Calu3 (cell line): ENCODE measurements at regions of chr1 and their contacts with region 1.

Region 1: GRCh38 chr1:170765712-170766330 is 101.9 kb downstream of the PRRX1 start:
- DNase-seq: no peak
- H3K4me3 Mint-ChIP-seq: no peak overlapping the region
- H3K27ac Mint-ChIP-seq: no peak overlapping the region
- H3K4me1 Mint-ChIP-seq: no peaks in the 10 kb centered on the region
- H3K27me3 Mint-ChIP-seq: no peaks in the 10 kb centered on the region
- CTCF ChIP-seq: no peak

Region 2: GRCh38 chr1:169928438-169929209 is 837.2 kb before region 1 on chr1:
- CTCF ChIA-PET with region 1: no interaction called
- intact Hi-C with region 1: loop called (anchors 1 kb)
- DNase-seq: no peak
- H3K4me3 Mint-ChIP-seq: no peak overlapping the region
- H3K27ac Mint-ChIP-seq: no peak overlapping the region
- H3K4me1 Mint-ChIP-seq: peaks cover 15% of the 10 kb centered on the region
- H3K27me3 Mint-ChIP-seq: no peaks in the 10 kb centered on the region
- CTCF ChIP-seq: peak; percentile 53

Region 3: GRCh38 chr1:170010443-170010842 is 755.4 kb before region 1 on chr1:
- CTCF ChIA-PET with region 1: no interaction called
- intact Hi-C with region 1: loop called (anchors 1 kb)
- DNase-seq: peak; percentile 65
- H3K4me3 Mint-ChIP-seq: no peak overlapping the region
- H3K27ac Mint-ChIP-seq: no peak overlapping the region
- H3K4me1 Mint-ChIP-seq: no peaks in the 10 kb centered on the region
- H3K27me3 Mint-ChIP-seq: no peaks in the 10 kb centered on the region
- CTCF ChIP-seq: peak; percentile 46

Region 4: DNA sequence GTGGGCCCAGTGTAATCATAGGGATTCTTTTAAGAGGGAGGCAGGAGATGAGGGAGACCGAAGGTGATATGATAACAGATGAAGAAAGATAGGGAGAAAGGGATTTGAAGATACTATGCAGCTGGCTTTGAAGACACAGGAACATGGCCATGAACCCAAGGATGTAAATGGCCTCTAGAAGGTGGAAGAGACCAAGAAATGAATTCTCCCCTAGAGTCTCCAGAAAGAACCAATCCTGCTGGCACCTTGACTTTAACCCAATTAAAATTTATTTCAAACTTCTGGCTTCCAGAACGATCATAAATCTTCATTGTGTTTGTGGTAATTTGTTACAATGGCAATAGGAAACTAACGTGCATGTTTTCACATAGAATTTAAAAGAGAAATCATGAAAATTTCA is 328.9 kb before region 1 on chr1:
- CTCF ChIA-PET with region 1: no interaction called
- intact Hi-C with region 1: loop called (anchors 5 kb)
- DNase-seq: no peak
- H3K4me3 Mint-ChIP-seq: no peak overlapping the region
- H3K27ac Mint-ChIP-seq: no peak overlapping the region
- H3K4me1 Mint-ChIP-seq: no peaks in the 10 kb centered on the region
- H3K27me3 Mint-ChIP-seq: no peaks in the 10 kb centered on the region
- CTCF ChIP-seq: no peak

Region 5: GRCh38 chr1:170692866-170693575 is 72.8 kb before region 1 on chr1:
- CTCF ChIA-PET with region 1: interaction called, 6 read pairs
- intact Hi-C with region 1: loop called (anchors 1 kb)
- DNase-seq: no peak
- H3K4me3 Mint-ChIP-seq: no peak overlapping the region
- H3K27ac Mint-ChIP-seq: peak overlapping the region; percentile 27
- H3K4me1 Mint-ChIP-seq: peaks cover 20% of the 10 kb centered on the region
- H3K27me3 Mint-ChIP-seq: no peaks in the 10 kb centered on the region
- CTCF ChIP-seq: no peak

Region 6: DNA sequence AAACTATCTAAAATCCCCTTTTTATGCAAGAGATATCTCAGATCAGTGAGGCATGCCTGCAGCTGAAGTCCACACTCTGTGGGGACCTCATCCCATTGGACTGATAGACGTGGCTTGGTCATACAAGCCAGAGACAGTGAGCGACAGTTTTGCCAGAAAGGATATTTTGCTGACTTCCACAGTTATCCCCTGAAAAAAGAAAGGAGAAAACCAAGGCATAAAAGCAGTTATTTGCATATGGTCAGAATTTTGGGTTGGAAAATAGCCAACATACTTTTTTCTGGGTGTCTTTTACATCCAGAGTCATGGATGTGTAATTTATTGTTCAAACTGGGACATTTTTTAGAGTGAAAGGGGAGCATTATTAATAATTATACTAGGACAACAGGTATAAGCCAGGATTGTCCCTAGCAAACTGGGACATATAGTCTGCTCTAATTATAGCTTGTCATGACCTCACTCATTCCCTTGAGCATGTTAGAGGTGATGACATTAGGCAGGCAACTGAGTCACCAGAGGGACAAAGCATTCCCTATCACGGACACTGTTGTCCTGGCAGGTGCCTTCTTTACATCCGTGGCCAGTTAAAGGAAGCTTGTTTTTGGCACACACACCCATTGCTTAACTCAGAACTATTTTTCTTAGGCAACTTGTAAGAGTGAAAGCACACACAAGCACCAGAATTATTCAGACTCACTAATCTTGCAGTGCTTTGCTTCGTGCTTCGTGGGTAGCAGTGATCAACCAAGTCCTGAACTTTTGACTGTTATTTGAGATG is 36.4 kb before region 1 on chr1:
- CTCF ChIA-PET with region 1: no interaction called
- intact Hi-C with region 1: no loop called
- DNase-seq: no peak
- H3K4me3 Mint-ChIP-seq: no peak overlapping the region
- H3K27ac Mint-ChIP-seq: no peak overlapping the region
- H3K4me1 Mint-ChIP-seq: peaks cover 11% of the 10 kb centered on the region
- H3K27me3 Mint-ChIP-seq: no peaks in the 10 kb centered on the region
- CTCF ChIP-seq: no peak

Region 7: DNA sequence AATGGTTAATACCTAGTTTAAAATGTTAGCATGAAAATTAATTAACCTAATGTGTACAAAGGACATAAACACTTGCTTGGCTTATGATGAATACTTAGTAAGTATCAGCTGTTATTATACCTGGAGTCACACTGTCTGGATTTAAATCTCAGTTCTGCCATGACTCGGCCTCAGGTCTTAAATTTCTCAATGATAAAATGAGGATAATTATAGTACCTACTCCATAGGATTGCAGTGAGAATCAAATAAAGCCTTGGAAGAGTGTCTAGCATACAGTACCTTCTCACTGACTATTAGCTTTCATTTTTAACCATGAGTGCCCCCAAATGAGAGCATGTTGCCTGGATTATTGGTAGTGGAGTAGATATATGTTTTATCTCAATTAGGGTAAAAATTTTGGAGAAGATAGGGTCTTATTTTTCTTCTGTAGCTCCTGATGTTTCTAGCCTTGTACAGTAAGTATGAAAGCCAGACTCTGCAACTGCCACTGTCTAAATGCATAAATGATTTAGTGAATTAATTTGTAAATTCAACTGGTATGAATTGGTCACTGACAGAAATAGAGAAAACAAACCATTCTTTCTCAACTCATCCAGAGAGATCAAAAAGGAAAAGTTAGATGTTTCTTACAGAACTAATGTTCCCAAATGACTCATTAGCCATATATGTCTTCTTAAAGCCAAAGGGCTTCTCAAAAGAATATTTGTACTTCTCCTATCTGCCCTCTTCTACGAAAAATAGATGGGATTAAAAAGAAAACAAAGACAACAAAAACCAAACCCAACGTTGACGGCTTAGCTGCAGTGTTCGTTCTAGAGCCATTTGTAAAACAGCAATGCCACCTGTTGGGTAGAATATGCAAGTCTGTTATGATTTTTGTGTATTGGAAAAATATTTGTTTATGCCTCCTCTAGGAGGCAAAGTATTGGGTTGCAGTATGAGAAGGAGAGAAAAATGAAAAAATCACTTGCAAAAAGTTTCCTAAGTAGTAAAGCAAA is 115.7 kb after region 1 on chr1:
- CTCF ChIA-PET with region 1: no interaction called
- intact Hi-C with region 1: loop called (anchors 1 kb)
- DNase-seq: peak; percentile 19
- H3K4me3 Mint-ChIP-seq: no peak overlapping the region
- H3K27ac Mint-ChIP-seq: no peak overlapping the region
- H3K4me1 Mint-ChIP-seq: peaks cover 6% of the 10 kb centered on the region
- H3K27me3 Mint-ChIP-seq: no peaks in the 10 kb centered on the region
- CTCF ChIP-seq: peak; percentile 43

Region 8: GRCh38 chr1:170929835-170930554 is 164.2 kb after region 1 on chr1:
- CTCF ChIA-PET with region 1: no interaction called
- intact Hi-C with region 1: loop called (anchors 5 kb)
- DNase-seq: peak; percentile 38
- H3K4me3 Mint-ChIP-seq: no peak overlapping the region
- H3K27ac Mint-ChIP-seq: no peak overlapping the region
- H3K4me1 Mint-ChIP-seq: no peaks in the 10 kb centered on the region
- H3K27me3 Mint-ChIP-seq: no peaks in the 10 kb centered on the region
- CTCF ChIP-seq: peak; percentile 73

Region 9: DNA sequence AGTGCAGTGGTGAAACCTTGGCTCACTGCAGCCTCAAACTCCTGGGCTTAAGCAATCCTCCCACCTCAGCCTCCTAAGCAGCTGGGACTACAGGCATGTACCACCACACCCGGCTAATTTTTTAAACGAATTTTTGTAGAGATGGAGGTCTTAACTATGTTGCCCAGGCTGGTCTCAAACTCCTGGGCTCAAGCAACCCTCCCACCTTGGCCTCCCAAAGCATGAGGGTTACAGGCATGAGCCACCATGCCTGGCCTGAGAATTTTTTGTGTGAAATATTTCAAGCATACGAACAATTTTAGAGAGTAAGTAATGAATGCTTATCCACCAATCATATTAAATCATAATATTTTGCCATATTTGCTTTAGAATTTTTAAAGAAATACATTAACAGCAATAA is 221.1 kb after region 1 on chr1:
- CTCF ChIA-PET with region 1: no interaction called
- intact Hi-C with region 1: no loop called
- DNase-seq: no peak
- H3K4me3 Mint-ChIP-seq: no peak overlapping the region
- H3K27ac Mint-ChIP-seq: no peak overlapping the region
- H3K4me1 Mint-ChIP-seq: no peaks in the 10 kb centered on the region
- H3K27me3 Mint-ChIP-seq: peaks cover 15% of the 10 kb centered on the region
- CTCF ChIP-seq: no peak